Gastrocnemius medialis (tissue), 4 donors: ENCODE measurements at regions of chr19 and their contacts with region 1.

Region 1: DNA sequence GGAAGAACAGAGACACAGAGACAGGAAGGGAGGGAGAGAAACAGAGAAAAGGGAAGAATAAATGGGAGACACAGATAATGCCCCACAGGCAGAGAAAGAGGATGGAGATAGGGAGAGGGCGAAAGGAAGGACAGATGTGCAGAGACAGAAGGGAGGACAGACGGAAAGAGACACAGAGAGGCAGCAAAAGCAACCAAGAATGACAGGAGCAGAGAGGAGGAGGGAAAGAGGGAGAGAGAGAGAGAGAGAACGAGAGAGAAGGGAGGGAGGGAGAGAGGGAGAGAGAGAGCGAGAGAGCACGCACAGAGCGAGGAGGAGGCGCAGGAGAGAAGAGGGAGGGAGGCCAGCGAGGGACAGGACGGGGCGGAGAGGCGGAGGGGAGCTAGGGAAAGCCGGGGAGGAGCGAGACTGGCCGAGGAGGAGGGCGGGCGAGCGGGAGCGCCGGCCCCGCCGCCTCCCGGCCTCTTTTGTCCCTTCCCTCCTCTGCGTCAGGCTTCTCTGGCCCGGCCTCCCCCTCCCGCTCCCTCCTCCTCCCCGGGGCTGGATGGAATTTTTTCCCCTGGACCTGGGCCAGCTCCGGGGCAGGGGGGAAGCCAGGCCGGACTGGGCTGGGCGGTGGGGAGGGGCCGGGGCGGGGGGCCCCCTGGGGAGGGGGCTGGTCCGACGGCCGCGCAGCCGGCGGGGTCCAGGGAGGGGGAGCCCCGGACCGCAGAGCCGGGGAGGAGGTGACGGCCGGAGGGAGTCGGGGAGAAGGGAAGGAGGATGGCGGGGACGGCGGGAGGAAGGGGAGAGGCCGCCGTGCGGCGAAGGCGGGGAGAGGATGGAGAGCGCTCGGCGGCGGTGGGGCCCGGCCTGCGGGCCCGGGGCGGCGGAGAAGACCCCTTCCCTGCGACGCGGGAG is 4.2 kb upstream of the SPACA6 start:
- DNase-seq: peak; percentile 72 to 74
- ATAC-seq: peak; percentile 79 to 83
- H3K4me3 ChIP-seq: peak overlapping the region; percentile 71 to 89 (median 82)
- H3K27ac ChIP-seq: peak overlapping the region; percentile 92 to 97 (median 94)
- H3K4me1 ChIP-seq: peaks cover 9 to 16% of the 10 kb centered on the region in 2 donors
- H3K27me3 ChIP-seq: peaks cover 0 to 5% (median 0%) of the 10 kb centered on the region in 3 donors
- CTCF ChIP-seq: peak in 1 of 5 experiments; percentile 29
- POLR2A ChIP-seq: peak in 1 of 2 donors; percentile 69

Region 2: GRCh38 chr19:51703575-51704515 is 14.9 kb after region 1 on chr19:
- in situ Hi-C with region 1: no loop called
- intact Hi-C with region 1: loop called (anchors 1 kb)
- DNase-seq: peak; percentile 84 to 87
- ATAC-seq: peak; percentile 88 to 93
- H3K4me3 ChIP-seq: peak overlapping the region; percentile 53 to 64 (median 60)
- H3K27ac ChIP-seq: peak overlapping the region; percentile 73 to 86 (median 79)
- H3K4me1 ChIP-seq: peaks cover 9 to 11% of the 10 kb centered on the region in 2 donors
- H3K27me3 ChIP-seq: no peaks in the 10 kb centered on the region
- CTCF ChIP-seq: peak in 2 of 5 experiments; percentile 43 to 48
- POLR2A ChIP-seq: peak; percentile 54 to 65

Region 3: DNA sequence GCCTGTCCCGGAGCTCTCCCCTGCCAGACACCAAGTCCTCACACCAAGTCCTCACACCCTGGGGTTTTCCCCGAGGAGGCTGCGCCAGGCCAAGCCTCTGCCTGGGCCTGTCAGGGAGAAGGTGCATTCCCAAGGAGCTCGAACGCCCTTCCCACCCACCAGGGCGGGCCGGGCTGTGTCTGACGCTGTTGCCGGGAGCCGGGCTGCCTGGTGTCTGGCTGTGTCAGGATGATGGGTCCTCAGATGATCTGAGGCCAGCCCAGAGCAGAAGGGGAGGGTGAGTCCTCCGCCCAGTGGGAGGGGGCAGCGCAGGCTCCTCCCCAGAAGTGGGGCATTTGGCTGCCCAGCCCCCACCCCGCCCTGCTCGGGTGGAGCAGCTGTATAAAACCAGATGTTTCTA is 37.1 kb after region 1 on chr19:
- in situ Hi-C with region 1: no loop called
- intact Hi-C with region 1: no loop called
- DNase-seq: no peak
- ATAC-seq: no peak
- H3K4me3 ChIP-seq: no peak overlapping the region
- H3K27ac ChIP-seq: no peak overlapping the region
- H3K4me1 ChIP-seq: no peaks in the 10 kb centered on the region
- H3K27me3 ChIP-seq: peaks cover 0 to 24% (median 13%) of the 10 kb centered on the region in 3 donors
- CTCF ChIP-seq: no peak
- POLR2A ChIP-seq: no peak